Caco-2 (cell line): ENCODE measurements at regions of chr1 and their contacts with region 1.

Region 1: DNA sequence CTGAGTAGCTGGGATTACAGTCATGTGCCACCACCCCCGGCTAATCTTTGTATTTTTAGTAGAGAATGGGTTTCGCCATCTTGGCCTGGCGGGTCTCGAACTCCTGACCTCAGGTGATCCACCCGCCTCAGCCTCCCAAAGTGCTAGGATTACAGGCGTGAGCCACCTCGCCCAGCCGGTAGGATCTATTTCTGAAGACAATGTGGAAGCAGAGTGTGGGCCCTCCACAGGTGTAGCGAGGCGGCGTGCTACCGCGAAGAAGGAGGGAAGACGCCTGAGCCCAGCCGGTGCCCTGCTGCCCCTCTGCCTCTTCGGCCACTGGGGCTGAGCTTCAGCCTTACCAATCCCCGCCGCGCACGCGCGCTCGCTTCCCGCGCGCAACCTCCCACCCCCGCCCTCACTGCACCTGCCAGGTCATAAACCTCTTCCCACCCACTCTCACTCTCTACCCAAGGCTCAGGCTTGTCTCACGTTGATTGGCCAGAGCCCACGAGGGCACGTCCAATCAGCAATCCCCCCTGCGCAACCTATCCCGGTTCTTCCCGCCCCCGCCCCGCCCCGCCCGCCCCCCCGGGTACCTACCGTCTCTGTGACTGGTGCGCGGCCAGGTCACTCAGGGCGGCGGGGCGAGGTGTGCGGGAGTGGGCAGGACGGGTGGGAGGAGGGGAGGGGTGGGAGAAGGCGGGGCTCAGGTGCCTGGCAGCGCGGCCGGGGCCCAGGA is 409 bp upstream of the HOOK1 start:
- DNase-seq: peak; percentile 88 to 96
- H3K4me3 ChIP-seq: peak overlapping the region; percentile 83
- H3K4me3 Mint-ChIP-seq: no peak overlapping the region
- H3K27ac Mint-ChIP-seq: no peak overlapping the region
- H3K4me1 ChIP-seq: peaks cover 6% of the 10 kb centered on the region
- H3K4me1 Mint-ChIP-seq: peaks cover 6% of the 10 kb centered on the region
- H3K27me3 ChIP-seq: no peaks in the 10 kb centered on the region
- H3K27me3 Mint-ChIP-seq: no peaks in the 10 kb centered on the region
- CTCF ChIP-seq: no peak

Region 2: DNA sequence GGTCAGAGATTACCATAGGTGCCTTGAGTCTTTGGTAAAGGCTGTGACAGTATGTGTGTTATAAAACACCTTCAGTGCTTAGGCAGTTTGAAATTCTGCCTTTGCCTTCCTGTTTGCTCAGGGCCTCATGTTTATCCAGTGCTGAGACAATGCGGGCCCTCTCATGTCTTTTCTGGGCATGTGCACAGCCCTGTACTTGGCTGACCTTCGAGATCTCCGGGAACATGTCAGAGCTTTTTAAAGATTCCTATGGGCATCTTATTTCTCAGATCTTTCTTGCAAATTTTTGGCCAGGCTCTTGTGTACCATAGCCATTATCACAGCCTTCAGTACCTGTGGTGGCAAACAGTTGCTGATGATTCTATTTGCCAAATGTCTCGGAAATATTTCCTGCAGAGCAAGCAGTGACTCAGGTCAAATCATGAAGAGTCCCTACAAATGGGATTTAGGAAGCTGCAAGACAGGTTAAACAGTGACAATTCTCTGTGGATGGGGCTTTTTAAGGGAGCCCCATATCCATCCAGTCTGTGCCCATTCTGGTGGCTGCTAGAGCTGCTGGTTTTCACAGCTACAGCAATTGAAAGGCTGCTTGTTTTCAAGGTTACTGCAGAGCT is 42.5 kb after region 1 on chr1:
- CTCF ChIA-PET with region 1: no interaction called
- POLR2A ChIA-PET with region 1: interaction called, 3 read pairs
- intact Hi-C with region 1: loop called (anchors 2 kb)
- DNase-seq: peak; percentile 49 to 70
- H3K4me3 ChIP-seq: no peak overlapping the region
- H3K4me3 Mint-ChIP-seq: peak overlapping the region; percentile 41
- H3K27ac Mint-ChIP-seq: peak overlapping the region; percentile 37
- H3K4me1 ChIP-seq: peaks cover 22% of the 10 kb centered on the region
- H3K4me1 Mint-ChIP-seq: peaks cover 10% of the 10 kb centered on the region
- H3K27me3 ChIP-seq: no peaks in the 10 kb centered on the region
- H3K27me3 Mint-ChIP-seq: no peaks in the 10 kb centered on the region
- CTCF ChIP-seq: no peak

Region 3: DNA sequence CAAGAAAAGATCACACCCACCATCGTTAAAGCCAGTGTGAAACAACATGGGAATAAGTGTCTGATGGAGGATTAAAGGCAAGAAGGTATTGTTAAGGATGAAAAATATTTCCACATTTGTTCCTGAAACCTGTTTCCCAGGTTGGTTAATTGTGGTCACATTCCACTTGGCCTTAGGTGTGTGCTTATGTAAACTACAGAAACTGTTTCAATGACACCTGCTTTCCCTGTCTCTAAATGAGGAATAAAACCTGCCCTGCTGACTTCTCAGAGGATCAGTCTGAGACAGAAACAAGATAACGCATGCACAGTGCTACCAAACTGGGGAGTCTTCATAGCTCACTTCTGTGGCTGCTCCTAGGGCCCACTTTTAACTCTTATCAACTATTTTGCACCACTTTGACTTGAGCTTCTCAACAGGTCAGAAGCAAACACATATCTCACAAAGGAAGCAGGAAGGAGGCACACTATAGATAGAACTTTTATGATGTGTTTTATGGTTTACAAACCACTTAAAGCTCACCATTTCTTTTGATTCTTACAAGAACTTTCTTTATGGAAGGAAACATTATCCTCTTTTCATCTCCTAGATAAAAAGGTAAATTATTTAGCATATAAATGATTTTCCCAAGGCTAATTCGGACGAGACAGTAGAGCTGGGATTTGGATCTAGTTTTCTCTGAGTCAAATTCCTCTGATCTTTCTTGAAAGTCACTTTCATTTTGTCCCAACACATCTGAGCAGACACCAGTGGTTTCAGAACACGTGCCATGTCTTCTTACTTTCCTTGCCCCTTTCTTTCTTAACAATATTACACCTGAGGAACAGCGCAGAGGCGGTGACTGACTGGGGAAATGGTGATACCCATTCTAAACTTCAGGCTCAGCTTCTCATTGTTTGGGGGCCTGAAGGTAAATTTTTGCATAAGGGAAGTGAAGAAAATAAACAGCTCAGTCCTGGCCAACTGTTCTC is 78.8 kb after region 1 on chr1:
- CTCF ChIA-PET with region 1: no interaction called
- POLR2A ChIA-PET with region 1: no interaction called
- intact Hi-C with region 1: loop called (anchors 2 kb)
- DNase-seq: peak; percentile 60 to 62
- H3K4me3 ChIP-seq: no peak overlapping the region
- H3K4me3 Mint-ChIP-seq: peak overlapping the region; percentile 27
- H3K27ac Mint-ChIP-seq: peak overlapping the region; percentile 83
- H3K4me1 ChIP-seq: peaks cover 29% of the 10 kb centered on the region
- H3K4me1 Mint-ChIP-seq: peaks cover 12% of the 10 kb centered on the region
- H3K27me3 ChIP-seq: no peaks in the 10 kb centered on the region
- H3K27me3 Mint-ChIP-seq: no peaks in the 10 kb centered on the region
- CTCF ChIP-seq: no peak